ENCODE measurements at regions of chr3 and their contacts with region 1.

Region 1: GRCh38 chr3:176430244-176431037 is 766.8 kb downstream of the TBL1XR1 start:
- DNase-seq: peak; percentile 10 to 49
- H3K4me3 ChIP-seq: no peak overlapping the region
- H3K27ac ChIP-seq: no peak overlapping the region
- H3K4me1 ChIP-seq: no peaks in the 10 kb centered on the region
- H3K27me3 ChIP-seq: no peaks in the 10 kb centered on the region
- CTCF ChIP-seq: peak; percentile 89

Region 2: DNA sequence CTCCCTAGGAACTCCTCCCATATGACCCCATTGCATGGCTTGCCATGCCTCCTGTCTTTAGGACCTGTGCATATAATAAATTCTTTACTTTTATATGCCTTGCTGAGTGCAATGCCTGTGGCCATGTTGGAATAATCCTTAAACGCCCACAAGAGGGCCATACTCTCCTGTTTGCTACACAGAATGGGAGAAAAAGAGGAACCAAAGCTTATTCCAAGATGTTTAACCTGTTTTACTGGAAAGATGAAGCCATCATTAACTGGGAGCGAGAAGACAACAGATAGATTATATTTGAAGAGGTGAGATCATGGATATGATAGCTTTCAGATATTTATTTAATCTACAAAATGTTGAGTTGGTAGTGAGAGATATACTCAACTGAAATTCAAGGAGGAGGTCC is 473.4 kb before region 1 on chr3:
- CTCF ChIA-PET with region 1: interaction called, 5 read pairs
- POLR2A ChIA-PET with region 1: no interaction called
- intact Hi-C with region 1: loop called (anchors 1 kb)
- DNase-seq: peak in 1 of 2 experiments; percentile 43
- H3K4me3 ChIP-seq: no peak overlapping the region
- H3K27ac ChIP-seq: no peak overlapping the region
- H3K4me1 ChIP-seq: no peaks in the 10 kb centered on the region
- H3K27me3 ChIP-seq: no peaks in the 10 kb centered on the region
- CTCF ChIP-seq: peak; percentile 63

Region 3: GRCh38 chr3:176615826-176616225 is 185.4 kb after region 1 on chr3:
- CTCF ChIA-PET with region 1: no interaction called
- POLR2A ChIA-PET with region 1: no interaction called
- intact Hi-C with region 1: no loop called
- DNase-seq: no peak
- H3K4me3 ChIP-seq: no peak overlapping the region
- H3K27ac ChIP-seq: no peak overlapping the region
- H3K4me1 ChIP-seq: no peaks in the 10 kb centered on the region
- H3K27me3 ChIP-seq: no peaks in the 10 kb centered on the region
- CTCF ChIP-seq: no peak

Region 4: DNA sequence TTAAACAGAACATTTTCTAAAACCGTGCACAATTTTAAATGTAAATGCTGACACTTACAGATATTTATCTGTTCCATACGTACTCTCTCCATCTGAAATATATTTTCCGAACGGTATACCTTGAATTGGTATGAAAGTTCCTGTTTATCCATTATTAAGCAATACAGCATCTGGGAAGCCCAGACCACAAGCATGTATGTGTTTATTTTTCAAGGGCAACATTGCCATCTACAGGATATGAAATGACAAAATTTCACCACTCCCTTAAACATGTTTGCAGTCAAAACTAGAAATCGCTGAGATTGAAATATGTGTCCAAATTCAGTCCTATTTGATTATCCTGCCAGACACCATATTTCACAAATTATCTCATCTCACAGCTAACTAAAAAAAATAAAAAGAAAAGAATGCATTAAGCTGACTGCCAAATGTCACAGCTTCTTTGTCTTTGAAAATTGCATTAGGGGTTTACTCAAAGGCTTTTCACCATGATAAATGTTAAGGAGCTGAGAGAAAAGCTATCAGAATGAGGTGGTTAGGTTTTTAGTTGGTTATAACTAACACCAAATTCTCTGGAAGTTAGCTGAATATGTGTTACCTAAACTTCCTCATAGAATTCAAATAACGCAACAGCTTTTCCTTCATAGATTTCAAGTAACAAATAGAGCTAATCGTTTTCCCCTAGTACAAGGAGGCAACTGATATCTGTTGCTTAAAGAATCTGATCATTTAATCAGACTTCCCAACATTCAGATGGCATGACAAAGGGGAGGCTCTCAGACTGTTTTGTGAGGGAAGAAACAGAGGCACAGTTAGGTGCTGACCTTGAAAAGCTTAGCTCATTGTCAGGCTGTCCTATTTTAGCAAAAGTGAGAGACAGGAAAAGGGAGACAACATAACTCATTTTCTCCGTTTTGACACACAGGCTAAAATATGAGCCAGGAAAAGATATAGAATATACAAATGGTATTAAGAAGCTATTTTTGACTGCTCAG is 233.7 kb after region 1 on chr3:
- CTCF ChIA-PET with region 1: interaction called, 3 read pairs
- POLR2A ChIA-PET with region 1: no interaction called
- intact Hi-C with region 1: loop called (anchors 5 kb)
- DNase-seq: peak; percentile 10 to 65
- H3K4me3 ChIP-seq: no peak overlapping the region
- H3K27ac ChIP-seq: no peak overlapping the region
- H3K4me1 ChIP-seq: 0 out of 2 replicates have a peak, but pooled peaks cover 4% of the 10 kb centered on the region
- H3K27me3 ChIP-seq: no peaks in the 10 kb centered on the region
- CTCF ChIP-seq: peak; percentile 69